SK-N-SH (cell line): ENCODE measurements at regions of chr2 and their contacts with region 1.

Region 1: DNA sequence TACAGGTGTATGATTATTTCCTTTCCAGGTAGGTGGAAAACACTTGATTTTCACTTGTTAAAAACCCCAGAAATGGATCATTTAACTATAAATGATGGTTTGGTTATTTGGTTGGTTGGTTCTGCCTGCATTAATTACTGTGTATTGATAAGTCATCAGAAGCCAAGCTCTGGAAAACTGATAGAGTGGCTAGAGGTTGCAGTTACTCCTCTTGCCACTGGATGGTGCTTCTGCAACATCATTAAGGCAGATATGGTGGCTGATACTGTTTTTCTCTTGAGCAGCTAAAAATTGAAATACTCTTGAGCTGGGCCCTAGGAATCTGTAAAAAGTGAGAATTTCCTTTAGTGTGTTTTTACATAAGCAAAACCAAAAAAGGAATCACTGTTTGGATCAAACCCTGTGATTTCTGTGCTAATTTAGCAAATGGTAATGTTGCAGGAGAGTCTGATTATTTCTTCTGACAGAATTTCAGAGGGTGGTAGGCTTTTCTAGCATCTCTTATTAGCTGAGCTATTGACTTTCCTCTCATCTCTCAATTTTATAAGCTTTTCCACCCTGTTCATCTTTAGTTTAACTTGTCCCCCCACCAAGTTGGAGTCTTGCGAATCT is 54.3 kb downstream of the RAB10 start:
- DNase-seq: peak; percentile 66
- H3K4me3 ChIP-seq: no peak overlapping the region; a peak in 1 of 4 replicates
- H3K27ac ChIP-seq: no peak overlapping the region
- H3K4me1 ChIP-seq: peaks cover 0 to 8% of the 10 kb centered on the region in 2 experiments; a peak in 2 of 4 replicates
- H3K27me3 ChIP-seq: no peaks in the 10 kb centered on the region
- CTCF ChIP-seq: peak; percentile 80
- EP300 ChIP-seq: no peak
- RAD21 ChIP-seq: peak; percentile 89

Region 2: DNA sequence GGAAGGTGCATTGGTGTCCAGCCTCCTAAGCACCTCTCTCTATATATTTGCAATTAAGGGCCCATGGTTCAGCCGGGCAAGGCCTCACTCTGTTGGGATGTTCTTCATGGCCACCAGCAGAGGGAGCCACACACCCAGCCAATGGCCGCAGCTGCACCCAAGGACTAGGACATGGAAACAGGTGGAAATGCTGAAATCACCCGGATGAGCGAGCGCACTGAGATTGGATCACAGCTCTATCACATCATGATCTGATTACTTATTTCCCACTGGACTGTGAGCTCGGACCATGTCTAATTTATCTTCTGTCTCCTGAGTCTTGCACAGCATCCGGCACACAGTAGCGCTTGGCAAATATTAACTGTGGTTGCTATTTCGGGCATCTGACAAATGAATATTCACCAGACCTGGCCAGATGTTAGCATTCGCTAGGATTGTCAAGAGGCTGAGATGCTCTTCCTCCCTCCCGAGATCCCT is 137.0 kb before region 1 on chr2:
- CTCF ChIA-PET with region 1: interaction called, 17 read pairs
- POLR2A ChIA-PET with region 1: no interaction called
- DNase-seq: peak; percentile 91
- H3K4me3 ChIP-seq: no peak overlapping the region; a peak in 1 of 4 replicates
- H3K27ac ChIP-seq: peak overlapping the region in 1 of 2 experiments; percentile 86; a peak in 2 of 4 replicates
- H3K4me1 ChIP-seq: peaks cover 5 to 7% of the 10 kb centered on the region in 2 experiments; a peak in 1 of 4 replicates
- H3K27me3 ChIP-seq: no peaks in the 10 kb centered on the region
- CTCF ChIP-seq: peak; percentile 99
- EP300 ChIP-seq: peak in 1 of 2 experiments; percentile 73; a peak in 1 of 4 replicates
- RAD21 ChIP-seq: peak; percentile 100

Region 3: GRCh38 chr2:26064846-26065245 is 23.3 kb before region 1 on chr2:
- CTCF ChIA-PET with region 1: interaction called, 20 read pairs
- POLR2A ChIA-PET with region 1: no interaction called
- DNase-seq: no peak
- H3K4me3 ChIP-seq: no peak overlapping the region
- H3K27ac ChIP-seq: no peak overlapping the region
- H3K4me1 ChIP-seq: peaks cover 3 to 16% of the 10 kb centered on the region in 2 experiments; a peak in 3 of 4 replicates
- H3K27me3 ChIP-seq: no peaks in the 10 kb centered on the region
- CTCF ChIP-seq: no peak
- EP300 ChIP-seq: no peak
- RAD21 ChIP-seq: no peak

Region 4: GRCh38 chr2:26099933-26100332 is 11.8 kb after region 1 on chr2:
- CTCF ChIA-PET with region 1: interaction called, 12 read pairs
- POLR2A ChIA-PET with region 1: no interaction called
- DNase-seq: no peak
- H3K4me3 ChIP-seq: no peak overlapping the region
- H3K27ac ChIP-seq: no peak overlapping the region
- H3K4me1 ChIP-seq: no peaks in the 10 kb centered on the region; a peak in 1 of 4 replicates
- H3K27me3 ChIP-seq: no peaks in the 10 kb centered on the region
- CTCF ChIP-seq: no peak
- EP300 ChIP-seq: no peak
- RAD21 ChIP-seq: no peak

Region 5: GRCh38 chr2:26126074-26126473 is 37.9 kb after region 1 on chr2:
- CTCF ChIA-PET with region 1: interaction called, 11 read pairs
- POLR2A ChIA-PET with region 1: no interaction called
- DNase-seq: no peak
- H3K4me3 ChIP-seq: no peak overlapping the region
- H3K27ac ChIP-seq: no peak overlapping the region
- H3K4me1 ChIP-seq: peaks cover 0 to 4% of the 10 kb centered on the region in 2 experiments; a peak in 1 of 4 replicates
- H3K27me3 ChIP-seq: no peaks in the 10 kb centered on the region
- CTCF ChIP-seq: no peak
- EP300 ChIP-seq: no peak
- RAD21 ChIP-seq: no peak

Region 6: DNA sequence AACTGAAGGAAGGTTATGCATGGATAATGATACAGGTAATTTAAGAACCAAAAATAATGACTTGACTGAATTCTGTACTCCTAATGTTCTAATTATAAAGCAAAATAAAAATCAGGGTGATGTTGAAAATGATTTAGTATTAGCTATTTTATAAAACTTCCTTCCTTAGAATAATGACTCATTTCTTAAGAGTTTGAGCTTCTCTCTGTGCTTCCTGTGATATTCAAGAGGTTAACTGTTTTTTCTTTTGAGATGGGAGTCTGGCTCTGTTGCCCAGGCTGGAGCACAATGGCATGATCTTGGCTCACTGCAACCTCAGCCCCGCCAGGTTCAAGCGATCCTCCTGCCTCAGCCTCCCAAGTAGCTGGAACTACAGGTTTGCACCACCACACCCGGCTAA is 141.5 kb after region 1 on chr2:
- CTCF ChIA-PET with region 1: no interaction called
- POLR2A ChIA-PET with region 1: no interaction called
- DNase-seq: no peak
- H3K4me3 ChIP-seq: no peak overlapping the region
- H3K27ac ChIP-seq: no peak overlapping the region
- H3K4me1 ChIP-seq: no peaks in the 10 kb centered on the region
- H3K27me3 ChIP-seq: no peaks in the 10 kb centered on the region
- CTCF ChIP-seq: no peak
- EP300 ChIP-seq: no peak
- RAD21 ChIP-seq: no peak